ENCODE measurements at regions of chr15 and their contacts with region 1.

Region 1: DNA sequence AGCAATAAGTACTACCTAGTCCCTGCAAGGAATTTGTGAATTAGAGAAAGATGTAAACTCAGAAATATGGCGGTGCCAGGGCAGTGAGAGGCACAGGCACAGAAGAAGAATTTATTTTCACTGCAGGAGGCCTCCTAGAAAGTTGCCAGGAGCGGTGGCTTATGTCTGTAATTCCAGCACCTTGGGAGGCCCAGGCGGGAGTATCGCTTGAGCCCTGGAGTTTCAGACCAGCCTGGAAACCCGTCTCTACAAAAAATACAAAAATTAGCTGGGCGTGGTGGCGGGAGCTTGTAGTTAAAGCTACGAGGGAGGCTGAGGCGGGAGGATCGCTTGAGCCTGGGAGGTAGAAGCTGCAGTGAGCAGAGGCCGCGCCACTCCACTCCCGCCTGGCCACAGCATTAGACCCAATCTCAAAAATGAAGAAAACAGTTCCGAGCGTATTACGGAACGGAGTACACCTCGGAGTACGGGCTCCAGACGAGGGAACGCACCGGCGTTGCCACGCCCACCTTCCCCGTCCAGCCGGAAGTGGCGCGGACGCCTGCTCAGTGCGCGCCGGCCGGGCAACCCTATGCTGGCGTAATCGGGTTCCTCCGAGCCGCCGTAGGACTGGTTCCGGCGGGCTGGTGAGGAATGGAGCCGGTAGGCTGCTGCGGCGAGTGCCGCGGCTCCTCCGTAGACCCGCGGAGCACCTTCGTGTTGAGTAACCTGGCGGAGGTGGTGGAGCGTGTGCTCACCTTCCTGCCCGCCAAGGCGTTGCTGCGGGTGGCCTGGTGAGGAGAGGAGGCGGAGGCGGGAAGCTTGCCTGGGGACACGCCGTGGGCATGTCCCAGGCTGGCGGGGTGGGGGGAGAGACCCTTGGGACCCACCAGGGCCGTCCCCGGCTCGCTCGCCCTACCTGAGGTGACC is at the start of gene FBXO22:
- DNase-seq: peak; percentile 78 to 92 (median 86)
- ATAC-seq: peak; percentile 91 to 92
- H3K4me3 Mint-ChIP-seq: peak within 1 kb of the TSS; percentile 92 to 99 (median 98)
- H3K27ac Mint-ChIP-seq: peak within 1 kb of the TSS; percentile 91 to 97 (median 96)
- H3K4me1 Mint-ChIP-seq: peaks cover 11 to 56% (median 51%) of the 10 kb centered on the region in 4 donors
- H3K27me3 Mint-ChIP-seq: no peaks in the 10 kb centered on the region
- polyA plus RNA-seq, gene FBXO22: 16.6 to 18.3 (median 16.8) TPM

Region 2: DNA sequence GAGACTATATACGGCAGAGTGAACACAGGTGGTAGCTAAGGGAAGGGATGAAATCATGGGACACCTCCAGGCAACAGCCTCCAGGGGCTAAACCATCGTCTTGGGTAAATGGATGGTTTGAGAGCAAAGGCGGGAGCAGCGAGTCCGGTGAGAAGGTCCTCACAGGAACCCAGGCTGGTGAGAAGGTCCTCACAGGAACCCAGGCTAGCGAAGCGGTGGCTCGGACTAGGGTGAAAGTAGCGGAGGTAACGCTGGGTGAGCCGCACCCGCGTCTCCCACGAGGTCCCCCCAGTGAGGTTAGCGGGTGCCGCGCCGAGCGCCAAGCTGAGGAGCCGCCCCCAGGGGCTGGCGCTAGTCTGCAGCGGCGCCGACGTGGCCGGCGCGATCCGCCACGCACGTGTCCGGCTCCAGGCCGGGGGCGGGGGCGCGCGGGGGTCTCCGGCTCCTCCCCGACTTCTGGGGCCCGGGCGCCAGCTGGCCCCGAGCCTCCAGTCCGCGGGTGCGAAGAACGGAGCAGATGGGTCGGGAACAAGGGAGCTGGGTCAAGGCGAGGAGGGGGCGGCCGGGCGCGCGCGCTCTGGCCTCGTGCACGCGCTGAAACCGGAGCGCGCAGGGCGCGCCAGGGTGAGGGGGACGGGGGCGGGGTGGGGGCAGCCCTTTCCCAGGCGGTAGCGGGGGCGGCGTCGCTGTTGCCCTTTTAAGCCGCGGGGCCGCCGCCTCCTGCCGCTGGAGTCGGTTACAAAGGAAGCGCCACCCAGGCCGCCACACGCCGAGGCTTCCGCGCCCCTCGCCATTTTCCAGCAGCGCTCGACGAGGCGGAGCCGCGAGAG is 60.6 kb before region 1 on chr15 and contains the start of gene UBE2Q2:
- POLR2A ChIA-PET with region 1: interaction called, 20 read pairs
- DNase-seq: peak; percentile 59 to 86 (median 68)
- ATAC-seq: peak; percentile 63 to 74
- H3K4me3 Mint-ChIP-seq: peak within 1 kb of the TSS; percentile 77 to 99 (median 94)
- H3K27ac Mint-ChIP-seq: peak within 1 kb of the TSS; percentile 91 to 98 (median 94)
- H3K4me1 Mint-ChIP-seq: peaks cover 26 to 47% (median 43%) of the 10 kb centered on the region in 4 donors
- H3K27me3 Mint-ChIP-seq: no peaks in the 10 kb centered on the region
- polyA plus RNA-seq, gene UBE2Q2: 18.7 to 25.7 (median 23.0) TPM

Region 3: DNA sequence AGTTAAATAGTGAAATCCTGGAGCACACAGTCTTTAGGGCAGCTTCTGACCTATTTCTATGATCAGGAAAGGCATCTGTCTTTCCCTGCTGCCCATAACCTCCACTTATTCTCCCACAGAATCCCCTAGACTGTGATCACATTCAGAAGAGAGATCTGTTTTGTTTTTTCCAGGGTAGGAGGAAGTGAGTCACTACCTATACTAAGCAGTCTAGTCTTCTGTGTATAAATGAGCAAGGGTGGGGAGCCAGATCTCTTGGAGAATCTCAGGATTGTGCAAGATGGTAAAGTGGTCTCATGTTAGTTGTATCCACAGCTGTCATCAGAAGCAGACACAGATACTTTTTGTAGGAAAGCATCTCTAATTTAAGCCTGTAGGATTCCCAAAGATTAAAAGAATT is 11.7 kb before region 1 on chr15:
- POLR2A ChIA-PET with region 1: no interaction called
- DNase-seq: no peak
- ATAC-seq: no peak
- H3K4me3 Mint-ChIP-seq: no peak overlapping the region
- H3K27ac Mint-ChIP-seq: peak overlapping the region in 2 of 10 donors; percentile 43 to 68
- H3K4me1 Mint-ChIP-seq: peaks cover 0 to 4% (median under 1%) of the 10 kb centered on the region in 4 donors
- H3K27me3 Mint-ChIP-seq: no peaks in the 10 kb centered on the region

Region 4: DNA sequence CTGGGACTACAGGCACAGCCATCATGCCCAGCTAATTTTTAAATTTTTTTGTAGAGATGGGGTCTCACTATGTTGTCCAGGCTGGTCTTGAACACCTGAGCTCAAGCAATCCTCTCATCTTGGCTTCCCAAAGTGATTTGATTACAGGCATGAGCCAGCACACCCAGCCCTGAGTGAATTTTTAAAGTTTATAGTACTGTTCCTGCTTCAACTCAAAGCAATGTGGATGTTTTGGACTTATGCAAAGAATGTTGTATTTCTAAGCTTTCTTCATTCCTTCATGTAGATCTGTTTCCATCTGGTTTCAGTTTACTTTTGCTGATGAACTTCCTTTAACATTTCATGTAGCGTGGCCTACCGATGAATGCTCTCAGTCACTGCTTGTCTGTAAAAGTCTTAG is 85.4 kb after region 1 on chr15:
- POLR2A ChIA-PET with region 1: no interaction called
- DNase-seq: no peak
- ATAC-seq: no peak
- H3K4me3 Mint-ChIP-seq: no peak overlapping the region
- H3K27ac Mint-ChIP-seq: no peak overlapping the region
- H3K4me1 Mint-ChIP-seq: no peaks in the 10 kb centered on the region
- H3K27me3 Mint-ChIP-seq: no peaks in the 10 kb centered on the region